ENCODE measurements at regions of chr11 and their contacts with region 1.

Region 1: DNA sequence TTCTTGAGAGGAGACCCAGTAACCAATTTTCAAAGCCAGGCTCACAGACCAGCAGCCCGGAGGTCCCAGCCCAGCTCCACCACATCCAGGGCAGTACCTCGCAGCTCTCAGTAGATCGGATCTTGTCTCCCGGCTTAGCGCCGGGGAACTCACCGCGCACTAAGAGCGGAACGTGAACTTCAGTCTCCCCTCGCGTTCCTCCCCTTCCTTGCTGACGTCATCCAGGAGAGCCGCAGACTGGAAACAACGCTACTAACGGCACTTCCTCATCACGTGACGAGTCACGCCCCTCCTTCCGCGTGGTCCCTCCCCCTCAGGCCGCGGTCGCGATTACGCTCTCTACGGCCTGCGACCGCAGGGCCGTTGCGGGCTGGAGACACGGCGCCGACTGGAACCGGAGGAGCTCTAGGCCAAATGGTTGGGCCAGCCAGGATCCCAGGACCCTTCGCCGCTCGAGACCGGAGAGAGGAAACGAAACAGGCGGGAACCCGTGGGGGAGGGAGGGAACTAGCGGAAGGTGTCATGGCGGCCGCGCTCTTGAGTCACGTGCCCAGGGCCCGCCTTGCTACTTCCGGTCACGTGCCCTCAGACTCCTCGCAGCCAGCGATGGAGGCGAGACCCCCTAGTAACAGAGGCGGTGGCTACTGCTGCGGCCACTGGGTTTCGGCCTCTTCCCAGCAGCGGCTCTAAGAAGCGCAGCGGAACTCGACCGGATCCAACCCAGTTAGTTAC is at the starts of genes GTF2H1 and HPS5:
- DNase-seq: peak; percentile 96 to 98 (median 96)
- ATAC-seq: peak; percentile 99
- H3K4me3 ChIP-seq: peak within 1 kb of the TSS; percentile 58 to 72
- H3K27ac ChIP-seq: peak within 1 kb of the TSS; percentile 94 to 99 (median 98)
- H3K4me1 ChIP-seq: peaks cover 39% of the 10 kb centered on the region
- H3K27me3 ChIP-seq: no peaks in the 10 kb centered on the region
- CTCF ChIP-seq: peak in 1 of 7 experiments; percentile 12
- POLR2A ChIP-seq: peak; percentile 70 to 97 (median 94)
- total RNA-seq, gene GTF2H1: 26.5 to 48.5 TPM
- total RNA-seq, gene HPS5: 8.3 to 47.5 TPM

Region 2: GRCh38 chr11:18395735-18396504 is 73.8 kb after region 1 on chr11:
- intact Hi-C with region 1: loop called (anchors 10 kb)
- DNase-seq: peak; percentile 98 to 99 (median 99)
- ATAC-seq: peak; percentile 91
- H3K4me3 ChIP-seq: peak overlapping the region; percentile 49 to 83
- H3K27ac ChIP-seq: peak overlapping the region; percentile 92 to 98 (median 94)
- H3K4me1 ChIP-seq: peaks cover 22% of the 10 kb centered on the region
- H3K27me3 ChIP-seq: no peaks in the 10 kb centered on the region
- CTCF ChIP-seq: no peak
- POLR2A ChIP-seq: peak; percentile 71 to 87 (median 82)